Psoas muscle (tissue), 8 donors: ENCODE measurements at regions of chr6 and their contacts with region 1.

Region 1: GRCh38 chr6:100664274-100665040 is 199.7 kb upstream of the SIM1 start:
- DNase-seq: no peak
- ATAC-seq: peak in 1 of 4 donors; percentile 64
- H3K4me3 ChIP-seq: no peak overlapping the region
- H3K27ac ChIP-seq: no peak overlapping the region
- H3K4me1 ChIP-seq: no peaks in the 10 kb centered on the region
- H3K27me3 ChIP-seq: no peaks in the 10 kb centered on the region
- CTCF ChIP-seq: peak; percentile 75

Region 2: DNA sequence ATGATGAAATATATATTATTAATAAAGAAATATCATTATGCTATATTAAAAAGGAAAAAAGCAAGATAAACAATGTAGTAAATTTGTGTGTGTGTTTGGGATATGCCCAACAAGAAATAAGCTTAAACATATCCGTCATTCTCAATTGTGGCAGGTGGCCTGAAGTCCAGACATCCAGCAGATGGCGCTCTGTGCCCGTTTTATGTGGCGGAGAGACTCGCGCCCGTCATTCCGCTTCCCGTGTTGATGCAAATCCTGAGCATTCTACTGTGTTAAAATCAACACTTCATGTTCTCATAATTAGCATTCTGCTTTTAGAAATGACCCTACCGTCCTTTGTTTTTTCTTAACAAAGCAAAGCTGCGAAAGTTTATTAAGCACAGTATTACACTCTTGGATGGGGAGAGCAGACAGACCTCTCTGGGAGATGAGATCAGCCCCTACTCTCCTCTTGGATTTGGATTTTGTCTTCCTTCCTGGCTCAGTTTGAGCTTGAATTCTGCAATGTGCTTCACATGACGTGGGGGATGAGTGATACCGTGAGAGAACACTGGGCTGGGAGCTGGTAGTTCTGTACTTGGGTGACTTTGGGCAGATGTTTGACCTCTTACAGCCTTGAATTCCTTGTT is 796.3 kb before region 1 on chr6:
- intact Hi-C with region 1: loop called (anchors 5 to 10 kb)
- DNase-seq: peak; percentile 63 to 86
- ATAC-seq: peak; percentile 62 to 88 (median 70)
- H3K4me3 ChIP-seq: no peak overlapping the region
- H3K27ac ChIP-seq: no peak overlapping the region
- H3K4me1 ChIP-seq: no peaks in the 10 kb centered on the region
- H3K27me3 ChIP-seq: peaks cover 0 to 2% (median 0%) of the 10 kb centered on the region in 3 donors
- CTCF ChIP-seq: peak; percentile 85

Region 3: DNA sequence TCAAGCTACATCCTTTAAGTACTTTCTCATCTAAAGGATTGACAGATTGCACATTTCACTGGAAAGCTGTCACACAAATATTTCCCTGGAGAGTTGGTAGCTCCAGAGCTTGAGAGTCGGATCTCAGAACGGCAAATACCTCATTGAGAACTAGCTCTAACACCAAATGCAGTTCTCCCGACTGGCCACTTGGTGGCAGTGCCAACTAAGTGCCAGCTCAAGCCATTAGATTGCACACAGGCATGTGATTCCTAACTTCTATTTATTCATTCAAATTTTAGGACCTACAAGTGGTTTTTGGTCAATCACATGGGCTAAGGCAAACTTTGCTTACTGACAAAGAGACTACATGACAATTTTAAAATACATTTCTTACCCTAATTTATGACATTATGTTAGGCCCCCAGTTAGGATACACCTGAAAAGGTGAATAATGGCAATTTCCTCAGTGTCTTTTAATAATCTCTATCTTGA is 662.5 kb before region 1 on chr6:
- intact Hi-C with region 1: loop called in 1 of 2 experiments (anchors 10 kb)
- DNase-seq: peak; percentile 31 to 66
- ATAC-seq: peak; percentile 76 to 96 (median 84)
- H3K4me3 ChIP-seq: no peak overlapping the region
- H3K27ac ChIP-seq: no peak overlapping the region
- H3K4me1 ChIP-seq: no peaks in the 10 kb centered on the region
- H3K27me3 ChIP-seq: no peaks in the 10 kb centered on the region
- CTCF ChIP-seq: peak; percentile 94

Region 4: DNA sequence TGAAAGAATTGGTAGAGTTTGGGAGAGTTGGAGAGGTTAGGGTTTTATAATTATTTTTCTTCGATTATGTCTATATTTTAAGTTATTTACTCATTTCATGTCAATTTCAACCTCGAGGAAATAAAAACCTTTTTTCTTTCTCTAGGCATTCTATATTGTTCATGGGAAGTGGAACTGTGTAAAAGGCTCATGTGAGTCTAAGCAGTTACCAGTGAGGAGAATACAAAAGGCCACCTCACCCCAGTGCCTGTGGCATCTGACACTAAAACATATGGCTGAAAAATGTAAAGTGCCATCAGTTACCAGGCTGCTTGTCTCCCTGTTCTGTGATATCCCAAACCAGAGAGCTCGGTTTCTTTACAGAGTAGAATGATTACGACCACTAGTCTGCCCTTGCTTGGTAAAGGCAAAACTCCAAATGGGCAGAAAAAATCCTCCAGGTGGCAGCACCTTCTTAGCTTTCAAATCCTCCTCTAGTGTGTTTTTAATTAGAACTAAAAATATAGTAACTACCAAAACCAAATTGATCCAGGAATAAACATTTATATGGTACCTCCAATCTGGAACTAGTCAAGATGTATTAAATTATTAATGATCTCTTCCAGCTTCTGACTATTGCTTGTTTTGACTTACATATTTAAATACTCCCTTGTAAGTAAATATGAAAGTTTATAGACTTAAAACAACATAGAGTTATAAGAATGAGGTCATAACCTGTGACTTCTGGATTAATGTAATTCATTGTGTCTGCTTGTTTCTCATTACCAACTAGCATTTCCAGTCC is 547.9 kb before region 1 on chr6:
- intact Hi-C with region 1: loop called (anchors 5 kb)
- DNase-seq: no peak
- ATAC-seq: peak in 3 of 4 donors; percentile 56 to 90 (median 59)
- H3K4me3 ChIP-seq: no peak overlapping the region
- H3K27ac ChIP-seq: no peak overlapping the region
- H3K4me1 ChIP-seq: no peaks in the 10 kb centered on the region
- H3K27me3 ChIP-seq: no peaks in the 10 kb centered on the region
- CTCF ChIP-seq: peak; percentile 77

Region 5: GRCh38 chr6:100322886-100323285 is 341.6 kb before region 1 on chr6:
- intact Hi-C with region 1: loop called in 1 of 2 experiments (anchors 10 kb)
- DNase-seq: no peak
- ATAC-seq: no peak
- H3K4me3 ChIP-seq: no peak overlapping the region
- H3K27ac ChIP-seq: no peak overlapping the region
- H3K4me1 ChIP-seq: no peaks in the 10 kb centered on the region
- H3K27me3 ChIP-seq: no peaks in the 10 kb centered on the region
- CTCF ChIP-seq: no peak

Region 6: DNA sequence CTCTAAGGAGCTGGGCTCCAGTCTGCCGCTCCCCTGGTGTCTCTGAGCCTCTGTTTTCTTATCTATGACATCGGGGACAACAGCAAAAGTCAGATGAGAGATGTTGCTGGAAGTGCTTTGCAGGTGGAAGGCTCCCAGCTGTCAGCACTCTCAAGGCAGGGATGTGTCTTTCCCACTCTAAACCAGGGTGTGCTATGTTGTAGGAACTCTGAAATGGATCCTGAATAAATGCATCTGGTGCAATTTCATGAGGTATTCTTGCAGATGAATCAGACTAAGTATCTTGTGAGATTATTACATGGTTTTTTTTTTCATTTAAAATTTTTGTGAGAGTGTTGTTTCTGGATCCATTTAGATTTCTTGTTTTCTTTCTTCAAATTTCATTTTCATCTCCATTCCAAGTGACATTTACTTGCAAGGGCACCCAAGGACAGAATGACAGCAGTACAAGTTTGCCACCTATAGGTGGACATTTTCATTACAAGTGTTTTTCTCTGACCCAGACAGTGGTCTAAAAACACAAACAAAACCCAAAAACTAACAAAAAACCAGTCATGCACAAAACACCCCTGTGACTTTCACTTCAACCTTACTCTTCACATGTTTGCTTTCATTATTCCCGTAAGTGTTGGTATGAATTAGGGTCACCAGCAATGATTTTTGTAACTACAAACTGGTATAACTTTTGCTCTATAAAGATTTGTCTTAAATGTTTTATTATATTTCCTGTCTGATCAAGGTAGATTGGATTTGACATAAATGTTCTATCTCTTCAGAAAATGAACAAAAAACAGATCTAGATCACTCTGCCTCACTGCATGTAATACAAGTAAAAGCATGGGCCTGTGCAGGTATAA is 185.1 kb before region 1 on chr6:
- intact Hi-C with region 1: loop called (anchors 10 kb)
- DNase-seq: no peak
- ATAC-seq: peak in 3 of 4 donors; percentile 49 to 87 (median 69)
- H3K4me3 ChIP-seq: no peak overlapping the region
- H3K27ac ChIP-seq: no peak overlapping the region
- H3K4me1 ChIP-seq: no peaks in the 10 kb centered on the region
- H3K27me3 ChIP-seq: no peaks in the 10 kb centered on the region
- CTCF ChIP-seq: peak; percentile 80

Region 7: DNA sequence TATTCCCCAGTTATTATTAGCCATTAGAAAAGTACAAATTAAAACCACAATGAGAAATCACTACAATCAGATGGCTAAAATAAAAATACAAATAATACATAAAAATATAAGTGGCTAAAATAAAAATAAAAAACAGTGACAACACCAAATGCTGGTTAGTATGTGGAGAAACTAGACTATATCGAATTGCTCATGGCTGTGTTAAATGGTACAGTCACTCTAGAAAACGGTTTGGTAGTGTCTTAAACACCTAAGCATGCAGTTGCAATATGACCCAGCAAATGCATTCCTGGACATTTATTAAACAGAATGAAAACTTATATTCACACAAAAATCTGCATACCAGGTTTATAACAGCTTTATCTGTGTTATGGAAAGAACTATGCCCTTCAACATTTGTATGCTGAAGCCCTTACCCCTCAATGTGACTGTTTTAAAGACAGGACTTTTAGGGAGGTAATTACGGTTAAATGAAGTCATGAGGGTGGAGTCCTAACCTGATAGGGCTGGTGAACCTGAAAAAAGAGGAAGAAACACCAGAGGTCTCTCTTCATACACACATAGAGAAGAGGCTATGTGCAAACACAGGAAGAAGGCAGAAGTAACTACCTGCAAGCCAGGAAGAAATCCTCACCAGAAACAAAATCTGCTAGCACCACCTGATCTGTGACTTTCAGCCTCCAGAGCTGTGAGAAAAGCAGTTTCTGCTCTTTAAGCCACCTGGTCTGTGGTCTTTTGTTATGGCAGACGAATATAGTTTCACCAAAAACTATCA is 131.8 kb after region 1 on chr6:
- intact Hi-C with region 1: no loop called
- DNase-seq: no peak
- ATAC-seq: no peak
- H3K4me3 ChIP-seq: no peak overlapping the region
- H3K27ac ChIP-seq: no peak overlapping the region
- H3K4me1 ChIP-seq: no peaks in the 10 kb centered on the region
- H3K27me3 ChIP-seq: no peaks in the 10 kb centered on the region
- CTCF ChIP-seq: no peak